ENCODE measurements at regions of chr7 and their contacts with region 1.

Region 1: DNA sequence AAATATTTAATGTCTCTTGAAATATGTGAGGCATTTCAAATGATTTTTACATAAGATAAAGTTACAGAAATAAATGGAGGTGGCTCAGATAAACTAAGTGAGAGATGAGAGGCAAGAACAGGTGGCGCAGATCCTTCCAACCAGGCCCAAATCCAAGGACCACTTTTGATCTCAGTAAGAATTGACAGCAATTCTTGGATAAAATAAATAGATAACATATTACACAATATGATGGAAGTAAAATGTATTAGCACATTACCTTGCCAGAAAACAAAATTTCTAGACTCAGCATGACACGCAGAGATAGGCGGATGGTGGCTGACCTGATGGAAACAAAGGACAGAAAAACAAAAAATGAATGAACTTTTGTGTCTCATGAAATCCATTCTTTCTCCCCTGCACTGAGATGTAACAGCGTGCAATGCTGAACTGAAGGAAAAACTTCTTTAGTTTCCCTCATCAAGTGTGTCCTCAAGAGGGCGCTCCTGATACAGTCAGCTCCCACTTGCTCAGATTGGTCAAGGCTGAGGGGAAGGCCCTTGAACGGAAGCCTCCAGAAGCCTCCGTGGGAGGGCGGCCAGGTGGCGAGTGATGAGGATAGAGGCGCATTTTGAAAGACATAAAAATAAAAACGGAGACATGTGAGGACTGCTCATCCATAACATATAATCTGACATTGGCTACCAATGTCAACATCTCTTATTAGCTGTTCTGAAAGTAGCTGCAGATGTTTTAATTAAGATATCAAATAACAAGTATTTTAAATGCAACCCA is 62.8 kb upstream of the GSDME start:
- DNase-seq: peak; percentile 70 to 81 (median 74)
- H3K4me3 ChIP-seq: peak overlapping the region in 1 of 2 donors; percentile 23
- H3K4me3 Mint-ChIP-seq: peak overlapping the region; percentile 78 to 90 (median 84)
- H3K27ac ChIP-seq: peak overlapping the region; percentile 78
- H3K27ac Mint-ChIP-seq: peak overlapping the region; percentile 88 to 100 (median 98)
- H3K4me1 ChIP-seq: peaks cover 42% of the 10 kb centered on the region
- H3K4me1 Mint-ChIP-seq: peaks cover 29 to 55% (median 42%) of the 10 kb centered on the region in 4 donors
- H3K27me3 ChIP-seq: no peaks in the 10 kb centered on the region
- H3K27me3 Mint-ChIP-seq: no peaks in the 10 kb centered on the region

Region 2: DNA sequence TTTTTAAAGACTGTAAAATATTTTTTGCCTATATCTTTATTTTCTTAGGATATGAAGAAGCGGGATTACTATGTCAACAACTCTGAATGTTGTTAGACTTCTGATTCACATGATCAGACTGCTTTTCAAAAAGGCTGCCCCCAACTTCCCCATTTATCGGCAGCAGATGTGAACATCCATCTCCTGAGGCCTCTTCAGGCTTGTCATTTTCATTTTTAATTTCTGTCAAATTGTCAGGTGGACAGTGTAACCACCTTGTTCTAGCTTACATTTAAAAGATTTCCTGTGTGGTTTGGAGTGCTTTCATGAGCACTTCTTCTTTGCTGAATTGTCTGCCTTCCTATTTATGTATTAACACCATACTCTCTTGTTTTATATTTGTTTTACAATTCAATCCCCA is 16.0 kb after region 1 on chr7:
- CTCF ChIA-PET with region 1: interaction called, 48 read pairs
- POLR2A ChIA-PET with region 1: interaction called, 34 read pairs
- intact Hi-C with region 1: loop called (anchors 1 kb)
- DNase-seq: peak in 4 of 5 donors; percentile 16 to 25 (median 20)
- H3K4me3 ChIP-seq: no peak overlapping the region
- H3K4me3 Mint-ChIP-seq: peak overlapping the region; percentile 1 to 76 (median 53)
- H3K27ac ChIP-seq: no peak overlapping the region
- H3K27ac Mint-ChIP-seq: peak overlapping the region; percentile 7 to 86 (median 26)
- H3K4me1 ChIP-seq: peaks cover 25% of the 10 kb centered on the region
- H3K4me1 Mint-ChIP-seq: peaks cover 22 to 40% (median 29%) of the 10 kb centered on the region in 4 donors
- H3K27me3 ChIP-seq: no peaks in the 10 kb centered on the region
- H3K27me3 Mint-ChIP-seq: no peaks in the 10 kb centered on the region

Region 3: GRCh38 chr7:24877790-24878311 is 57.7 kb after region 1 on chr7:
- CTCF ChIA-PET with region 1: interaction called, 9 read pairs
- POLR2A ChIA-PET with region 1: interaction called, 7 read pairs
- intact Hi-C with region 1: loop called (anchors 2 kb)
- DNase-seq: peak in 1 of 5 donors; percentile 53
- H3K4me3 ChIP-seq: no peak overlapping the region
- H3K4me3 Mint-ChIP-seq: peak overlapping the region in 1 of 8 donors; percentile 73
- H3K27ac ChIP-seq: no peak overlapping the region
- H3K27ac Mint-ChIP-seq: peak overlapping the region in 3 of 7 donors; percentile 7 to 75 (median 43)
- H3K4me1 ChIP-seq: peaks cover 28% of the 10 kb centered on the region
- H3K4me1 Mint-ChIP-seq: peaks cover 8 to 40% (median 22%) of the 10 kb centered on the region in 4 donors
- H3K27me3 ChIP-seq: no peaks in the 10 kb centered on the region
- H3K27me3 Mint-ChIP-seq: no peaks in the 10 kb centered on the region

Region 4: DNA sequence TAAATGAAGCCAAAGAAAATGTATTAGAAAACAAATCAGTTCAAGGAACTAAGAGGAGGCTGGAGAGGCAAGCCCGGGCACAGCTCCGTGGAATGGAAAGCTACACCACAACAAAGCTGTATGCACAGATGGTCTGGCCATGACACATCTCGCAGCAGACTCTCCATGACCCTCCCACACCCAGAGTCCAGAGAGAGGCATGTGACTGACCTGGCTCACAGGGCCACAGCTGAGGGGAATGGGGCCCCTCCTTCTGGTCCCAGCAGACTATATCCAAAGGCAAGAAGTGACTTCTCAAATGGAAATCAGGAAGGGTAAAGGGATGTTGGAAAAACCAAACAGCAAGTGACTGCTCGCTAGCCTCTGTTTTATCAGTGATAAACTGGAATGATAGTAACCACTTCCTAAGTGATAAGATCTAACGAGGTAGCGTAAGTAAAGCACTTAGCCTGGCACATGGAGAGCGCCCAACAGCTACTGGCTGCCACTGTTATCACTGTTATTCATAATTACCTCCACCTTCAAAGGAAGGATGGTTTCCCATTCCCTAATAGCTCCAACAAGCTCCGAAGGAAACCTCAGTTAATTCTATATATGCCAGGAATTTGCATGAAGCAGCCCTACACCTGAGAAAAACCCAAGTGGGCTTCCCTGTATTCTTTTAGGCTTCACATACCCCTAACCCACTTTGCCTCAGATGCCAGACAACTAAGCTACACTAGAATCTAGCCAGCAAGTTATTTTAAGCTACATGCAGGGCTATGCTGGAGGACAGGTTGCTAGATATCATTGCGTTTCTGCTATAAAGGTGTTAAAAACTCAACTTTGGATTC is 151.4 kb after region 1 on chr7:
- CTCF ChIA-PET with region 1: interaction called, 135 read pairs
- POLR2A ChIA-PET with region 1: interaction called, 164 read pairs
- intact Hi-C with region 1: no loop called
- DNase-seq: peak in 1 of 5 donors; percentile 37
- H3K4me3 ChIP-seq: no peak overlapping the region
- H3K4me3 Mint-ChIP-seq: peak overlapping the region in 6 of 8 donors; percentile 38 to 72 (median 54)
- H3K27ac ChIP-seq: no peak overlapping the region
- H3K27ac Mint-ChIP-seq: peak overlapping the region in 4 of 7 donors; percentile 21 to 71 (median 38)
- H3K4me1 ChIP-seq: peaks cover 70% of the 10 kb centered on the region
- H3K4me1 Mint-ChIP-seq: peaks cover 63 to 85% (median 75%) of the 10 kb centered on the region in 4 donors
- H3K27me3 ChIP-seq: no peaks in the 10 kb centered on the region
- H3K27me3 Mint-ChIP-seq: no peaks in the 10 kb centered on the region

Region 5: DNA sequence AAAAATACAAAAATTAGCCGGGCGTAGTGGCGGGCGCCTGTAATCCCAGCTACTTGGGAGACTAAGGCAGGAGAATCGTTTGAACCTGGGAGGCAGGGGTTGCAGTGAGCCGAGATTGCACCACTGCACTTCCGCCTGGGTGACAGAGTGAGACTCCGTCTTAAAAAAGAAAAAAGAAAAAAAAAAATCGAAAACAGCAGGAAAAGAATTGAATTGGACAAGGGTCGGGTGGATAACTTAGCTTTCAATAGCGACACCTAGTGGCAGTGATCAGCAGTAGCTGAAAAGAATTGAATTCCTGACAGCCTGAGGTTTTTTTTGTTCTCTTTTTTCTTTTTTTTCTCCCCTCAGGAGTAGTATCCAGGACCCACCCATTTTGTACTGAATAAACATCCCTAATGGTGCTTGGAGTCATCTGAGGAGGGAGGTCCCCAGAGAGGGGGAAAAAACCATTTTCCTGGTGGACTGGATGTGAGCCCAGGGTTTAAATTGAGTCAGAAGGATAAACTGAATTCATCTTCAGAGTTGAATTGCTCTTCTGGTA is 249.9 kb after region 1 on chr7:
- CTCF ChIA-PET with region 1: interaction called, 85 read pairs
- POLR2A ChIA-PET with region 1: interaction called, 30 read pairs
- intact Hi-C with region 1: loop called (anchors 1 kb)
- DNase-seq: peak; percentile 43 to 57 (median 54)
- H3K4me3 ChIP-seq: no peak overlapping the region
- H3K4me3 Mint-ChIP-seq: no peak overlapping the region
- H3K27ac ChIP-seq: no peak overlapping the region
- H3K27ac Mint-ChIP-seq: peak overlapping the region in 2 of 7 donors; percentile 44 to 51
- H3K4me1 ChIP-seq: peaks cover 5% of the 10 kb centered on the region
- H3K4me1 Mint-ChIP-seq: peaks cover 0 to 7% (median 4%) of the 10 kb centered on the region in 4 donors
- H3K27me3 ChIP-seq: no peaks in the 10 kb centered on the region
- H3K27me3 Mint-ChIP-seq: no peaks in the 10 kb centered on the region

Measured in CD4-positive, alpha-beta memory T cell (primary cell).